ENCODE measurements at regions of chr1 and their contacts with region 1.

Region 1: GRCh38 chr1:225911191-225912130 is 12.6 kb downstream of the PYCR2 start:
- DNase-seq: peak; percentile 54 to 79 (median 70)
- H3K4me3 ChIP-seq: no peak overlapping the region
- H3K4me3 Mint-ChIP-seq: peak overlapping the region in 2 of 8 donors; percentile 14 to 21
- H3K27ac ChIP-seq: no peak overlapping the region
- H3K27ac Mint-ChIP-seq: peak overlapping the region in 2 of 7 donors; percentile 51 to 64
- H3K4me1 ChIP-seq: peaks cover 25% of the 10 kb centered on the region
- H3K4me1 Mint-ChIP-seq: peaks cover 18 to 33% (median 25%) of the 10 kb centered on the region in 4 donors
- H3K27me3 ChIP-seq: no peaks in the 10 kb centered on the region
- H3K27me3 Mint-ChIP-seq: no peaks in the 10 kb centered on the region

Region 2: DNA sequence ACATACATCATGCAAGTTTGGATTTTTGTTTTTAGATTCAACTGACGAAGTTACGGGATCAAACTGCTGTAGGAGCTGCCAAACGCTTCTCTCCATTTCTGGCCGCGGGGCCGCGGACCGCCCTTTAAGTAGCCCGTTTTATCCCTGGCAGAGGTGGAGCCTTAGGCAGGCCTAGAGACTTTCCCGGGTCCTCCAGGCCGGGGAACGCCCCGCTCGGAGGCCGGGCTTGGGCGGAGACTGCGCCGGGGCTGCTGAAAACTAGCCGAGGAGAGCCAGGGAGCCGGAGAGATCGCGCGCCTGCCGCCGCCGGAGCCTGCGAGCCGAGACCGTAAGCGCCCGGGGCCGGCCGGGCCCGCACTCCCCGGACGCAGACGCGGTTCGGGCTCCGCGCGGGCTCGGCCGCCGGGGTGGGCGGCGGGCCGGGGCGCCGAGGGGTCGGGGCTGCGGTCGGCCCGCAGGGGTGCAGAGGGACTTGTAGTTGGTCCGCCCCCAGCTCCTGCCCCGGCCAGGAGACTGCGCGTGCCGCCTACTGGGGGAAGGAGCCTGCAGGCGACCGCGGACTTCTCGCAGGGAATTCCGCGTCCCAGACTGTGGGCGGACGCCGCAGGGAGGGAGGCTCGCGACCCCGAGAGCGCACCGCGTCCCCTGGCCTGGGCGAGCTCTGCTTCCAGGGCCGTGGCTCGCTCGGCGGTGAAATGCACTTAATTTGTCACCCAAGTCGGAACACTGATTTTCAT is 101.5 kb before region 1 on chr1 and contains the start of gene EPHX1:
- CTCF ChIA-PET with region 1: no interaction called
- POLR2A ChIA-PET with region 1: no interaction called
- intact Hi-C with region 1: loop called (anchors 1 kb)
- DNase-seq: peak; percentile 36 to 62 (median 52)
- H3K4me3 ChIP-seq: peak within 1 kb of the TSS; percentile 27 to 29
- H3K4me3 Mint-ChIP-seq: peak within 1 kb of the TSS; percentile 81 to 91 (median 86)
- H3K27ac ChIP-seq: no peak within 1 kb of the TSS
- H3K27ac Mint-ChIP-seq: peak within 1 kb of the TSS in 1 of 7 donors; percentile 84
- H3K4me1 ChIP-seq: peaks cover 11% of the 10 kb centered on the region
- H3K4me1 Mint-ChIP-seq: peaks cover 5 to 13% (median 6%) of the 10 kb centered on the region in 4 donors
- H3K27me3 ChIP-seq: no peaks in the 10 kb centered on the region
- H3K27me3 Mint-ChIP-seq: peaks cover 0 to 2% of the 10 kb centered on the region in 2 donors
- total RNA-seq, gene EPHX1: 2.1 to 3.0 TPM

Region 3: GRCh38 chr1:225866061-225866837 is 45.2 kb before region 1 on chr1:
- CTCF ChIA-PET with region 1: interaction called, 26 read pairs
- POLR2A ChIA-PET with region 1: interaction called, 730 read pairs
- intact Hi-C with region 1: loop called (anchors 1 kb)
- DNase-seq: peak; percentile 69 to 89 (median 73)
- H3K4me3 ChIP-seq: no peak overlapping the region
- H3K4me3 Mint-ChIP-seq: peak overlapping the region in 7 of 8 donors; percentile 58 to 85 (median 76)
- H3K27ac ChIP-seq: peak overlapping the region; percentile 52
- H3K27ac Mint-ChIP-seq: peak overlapping the region; percentile 85 to 95 (median 90)
- H3K4me1 ChIP-seq: peaks cover 42% of the 10 kb centered on the region
- H3K4me1 Mint-ChIP-seq: peaks cover 31 to 60% (median 44%) of the 10 kb centered on the region in 4 donors
- H3K27me3 ChIP-seq: no peaks in the 10 kb centered on the region
- H3K27me3 Mint-ChIP-seq: no peaks in the 10 kb centered on the region

Region 4: GRCh38 chr1:225881969-225882693 is 29.3 kb before region 1 on chr1 and contains the start of gene TMEM63A:
- CTCF ChIA-PET with region 1: interaction called, 294 read pairs
- POLR2A ChIA-PET with region 1: interaction called, 730 read pairs
- intact Hi-C with region 1: loop called (anchors 1 kb)
- DNase-seq: peak; percentile 86 to 92 (median 88)
- H3K4me3 ChIP-seq: peak within 1 kb of the TSS; percentile 89 to 98
- H3K4me3 Mint-ChIP-seq: peak within 1 kb of the TSS; percentile 95 to 99 (median 98)
- H3K27ac ChIP-seq: peak within 1 kb of the TSS; percentile 84
- H3K27ac Mint-ChIP-seq: peak within 1 kb of the TSS; percentile 93 to 97 (median 96)
- H3K4me1 ChIP-seq: peaks cover 48% of the 10 kb centered on the region
- H3K4me1 Mint-ChIP-seq: peaks cover 37 to 57% (median 46%) of the 10 kb centered on the region in 4 donors
- H3K27me3 ChIP-seq: no peaks in the 10 kb centered on the region
- H3K27me3 Mint-ChIP-seq: no peaks in the 10 kb centered on the region
- total RNA-seq, gene TMEM63A: 476 to 507 TPM

Region 5: GRCh38 chr1:225923692-225924555 is 12.5 kb after region 1 on chr1 and contains the start of gene PYCR2:
- CTCF ChIA-PET with region 1: interaction called, 29 read pairs
- POLR2A ChIA-PET with region 1: interaction called, 9 read pairs
- intact Hi-C with region 1: no loop called
- DNase-seq: peak; percentile 93 to 96 (median 95)
- H3K4me3 ChIP-seq: peak within 1 kb of the TSS; percentile 94 to 96
- H3K4me3 Mint-ChIP-seq: peak within 1 kb of the TSS; percentile 90 to 97 (median 94)
- H3K27ac ChIP-seq: peak within 1 kb of the TSS; percentile 85
- H3K27ac Mint-ChIP-seq: peak within 1 kb of the TSS; percentile 90 to 97 (median 95)
- H3K4me1 ChIP-seq: peaks cover 68% of the 10 kb centered on the region
- H3K4me1 Mint-ChIP-seq: peaks cover 13 to 52% (median 28%) of the 10 kb centered on the region in 4 donors
- H3K27me3 ChIP-seq: no peaks in the 10 kb centered on the region
- H3K27me3 Mint-ChIP-seq: no peaks in the 10 kb centered on the region
- total RNA-seq, gene PYCR2: 102 to 116 TPM

Region 6: GRCh38 chr1:226248091-226248490 is 336.6 kb after region 1 on chr1:
- CTCF ChIA-PET with region 1: no interaction called
- POLR2A ChIA-PET with region 1: no interaction called
- intact Hi-C with region 1: no loop called
- DNase-seq: no peak
- H3K4me3 ChIP-seq: no peak overlapping the region
- H3K4me3 Mint-ChIP-seq: no peak overlapping the region
- H3K27ac ChIP-seq: no peak overlapping the region
- H3K27ac Mint-ChIP-seq: no peak overlapping the region
- H3K4me1 ChIP-seq: no peaks in the 10 kb centered on the region
- H3K4me1 Mint-ChIP-seq: no peaks in the 10 kb centered on the region
- H3K27me3 ChIP-seq: no peaks in the 10 kb centered on the region
- H3K27me3 Mint-ChIP-seq: no peaks in the 10 kb centered on the region

Region 7: DNA sequence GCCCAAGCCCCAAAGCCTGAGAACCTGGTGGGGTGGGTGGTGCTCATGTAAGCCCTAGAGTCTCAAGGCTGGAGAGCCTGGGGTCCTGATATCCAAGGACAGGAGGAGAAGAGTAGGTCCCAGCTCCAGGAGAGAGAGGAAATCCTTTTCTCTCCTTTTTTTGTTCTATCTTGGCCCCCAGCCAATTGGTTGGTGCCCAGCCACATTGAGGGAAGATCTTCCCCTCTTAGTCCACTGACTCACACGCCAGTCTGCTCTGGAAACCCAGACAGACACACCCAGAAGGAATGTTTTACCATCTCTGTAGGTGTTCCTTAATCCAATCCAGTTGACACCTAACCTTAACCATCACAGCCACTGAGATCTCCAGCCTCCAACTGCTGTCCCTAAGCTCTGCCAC is 413.7 kb after region 1 on chr1:
- CTCF ChIA-PET with region 1: no interaction called
- POLR2A ChIA-PET with region 1: no interaction called
- intact Hi-C with region 1: no loop called
- DNase-seq: no peak
- H3K4me3 ChIP-seq: no peak overlapping the region
- H3K4me3 Mint-ChIP-seq: no peak overlapping the region
- H3K27ac ChIP-seq: no peak overlapping the region
- H3K27ac Mint-ChIP-seq: no peak overlapping the region
- H3K4me1 ChIP-seq: no peaks in the 10 kb centered on the region
- H3K4me1 Mint-ChIP-seq: no peaks in the 10 kb centered on the region
- H3K27me3 ChIP-seq: no peaks in the 10 kb centered on the region
- H3K27me3 Mint-ChIP-seq: peaks cover 2 to 7% of the 10 kb centered on the region in 2 donors

Region 8: DNA sequence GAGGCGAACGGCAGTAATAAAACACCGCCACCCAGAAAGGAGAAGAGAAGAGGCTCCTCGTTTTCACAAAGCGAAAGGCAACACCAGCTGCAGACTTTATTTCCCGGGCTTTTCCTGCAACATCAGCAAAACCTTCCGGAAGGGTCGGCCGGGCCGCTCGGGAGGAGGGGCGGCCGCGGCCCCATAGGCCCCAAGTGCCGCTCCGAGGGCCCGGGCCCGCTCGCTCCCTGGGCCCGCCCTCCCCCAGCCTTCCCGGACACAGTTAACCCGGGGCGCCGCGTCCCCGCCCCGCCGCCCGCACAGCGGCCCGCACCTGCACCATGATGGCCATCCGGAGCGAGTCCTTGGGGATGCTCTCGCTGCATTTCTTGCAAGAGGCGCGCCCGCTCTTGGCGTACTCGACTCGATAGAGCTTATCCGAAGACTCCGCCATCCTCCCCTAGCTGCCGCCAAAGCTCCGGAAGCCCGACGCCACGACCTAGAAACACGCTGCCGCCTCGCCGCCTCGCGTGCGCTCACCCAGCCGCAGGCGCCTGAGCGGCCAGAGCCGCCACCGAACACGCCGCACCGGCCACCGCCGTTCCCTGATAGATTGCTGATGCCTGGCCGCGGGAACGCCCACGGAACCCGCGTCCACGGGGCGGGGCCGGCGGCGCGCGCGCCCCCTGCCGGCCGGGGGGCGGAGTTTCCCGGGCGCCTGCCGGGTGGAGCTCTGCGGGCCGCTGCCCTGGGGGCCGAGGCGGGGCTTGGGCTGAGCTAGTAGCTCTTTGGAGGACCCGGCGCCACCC is 496.2 kb after region 1 on chr1 and contains the start of gene PARP1:
- CTCF ChIA-PET with region 1: no interaction called
- POLR2A ChIA-PET with region 1: no interaction called
- intact Hi-C with region 1: no loop called
- DNase-seq: peak; percentile 91 to 94 (median 91)
- H3K4me3 ChIP-seq: peak within 1 kb of the TSS; percentile 68 to 83
- H3K4me3 Mint-ChIP-seq: peak within 1 kb of the TSS; percentile 94 to 99 (median 98)
- H3K27ac ChIP-seq: peak within 1 kb of the TSS; percentile 76
- H3K27ac Mint-ChIP-seq: peak within 1 kb of the TSS; percentile 94 to 98 (median 96)
- H3K4me1 ChIP-seq: peaks cover 46% of the 10 kb centered on the region
- H3K4me1 Mint-ChIP-seq: peaks cover 32 to 60% (median 43%) of the 10 kb centered on the region in 4 donors
- H3K27me3 ChIP-seq: no peaks in the 10 kb centered on the region
- H3K27me3 Mint-ChIP-seq: no peaks in the 10 kb centered on the region
- total RNA-seq, gene PARP1: 120 to 129 TPM

Region 9: DNA sequence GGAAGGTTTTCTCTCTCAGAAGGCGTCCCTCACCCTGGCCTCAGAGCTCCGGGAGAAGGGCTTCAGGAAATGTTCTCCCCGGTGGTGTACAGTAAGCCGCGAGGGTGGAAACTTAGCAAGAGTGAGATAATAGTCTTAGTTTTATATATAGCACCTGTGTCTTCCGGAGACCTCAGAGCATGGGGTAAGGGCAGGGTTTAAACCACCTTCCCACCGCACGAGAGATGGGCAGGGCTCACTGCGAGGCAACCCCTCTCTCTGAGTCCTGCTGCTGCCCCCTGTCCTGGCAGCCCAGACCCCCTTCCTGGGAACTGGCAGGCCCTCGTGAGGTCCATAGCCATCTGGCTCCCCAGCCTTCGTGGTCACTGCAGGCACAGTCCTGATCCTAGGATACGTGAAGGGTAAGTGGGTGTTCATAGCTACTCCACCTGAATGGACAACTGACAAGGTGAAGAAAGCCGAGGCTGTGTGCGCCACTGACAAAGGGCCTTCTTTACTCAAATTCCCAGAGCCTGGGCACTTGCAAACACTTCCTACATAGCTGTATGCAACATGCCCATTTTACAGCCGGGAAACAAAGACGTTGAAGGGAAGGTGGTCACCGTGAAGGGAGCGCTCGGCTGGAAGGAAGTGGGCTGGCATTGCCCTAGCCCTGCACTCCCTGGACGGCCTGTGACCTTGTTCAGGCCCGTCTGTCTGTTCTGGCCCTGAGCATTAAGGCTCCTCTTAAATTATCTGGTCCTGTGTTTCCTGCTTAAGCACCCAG is 800.7 kb after region 1 on chr1:
- CTCF ChIA-PET with region 1: no interaction called
- POLR2A ChIA-PET with region 1: no interaction called
- intact Hi-C with region 1: no loop called
- DNase-seq: peak; percentile 63 to 88 (median 67)
- H3K4me3 ChIP-seq: peak overlapping the region; percentile 32 to 43
- H3K4me3 Mint-ChIP-seq: peak overlapping the region; percentile 78 to 89 (median 80)
- H3K27ac ChIP-seq: peak overlapping the region; percentile 60
- H3K27ac Mint-ChIP-seq: peak overlapping the region; percentile 85 to 100 (median 96)
- H3K4me1 ChIP-seq: peaks cover 92% of the 10 kb centered on the region
- H3K4me1 Mint-ChIP-seq: peaks cover 79 to 100% (median 89%) of the 10 kb centered on the region in 4 donors
- H3K27me3 ChIP-seq: no peaks in the 10 kb centered on the region
- H3K27me3 Mint-ChIP-seq: peaks cover 2 to 3% of the 10 kb centered on the region in 2 donors